ENCODE measurements at regions of chr6 and their contacts with region 1.

Region 1: DNA sequence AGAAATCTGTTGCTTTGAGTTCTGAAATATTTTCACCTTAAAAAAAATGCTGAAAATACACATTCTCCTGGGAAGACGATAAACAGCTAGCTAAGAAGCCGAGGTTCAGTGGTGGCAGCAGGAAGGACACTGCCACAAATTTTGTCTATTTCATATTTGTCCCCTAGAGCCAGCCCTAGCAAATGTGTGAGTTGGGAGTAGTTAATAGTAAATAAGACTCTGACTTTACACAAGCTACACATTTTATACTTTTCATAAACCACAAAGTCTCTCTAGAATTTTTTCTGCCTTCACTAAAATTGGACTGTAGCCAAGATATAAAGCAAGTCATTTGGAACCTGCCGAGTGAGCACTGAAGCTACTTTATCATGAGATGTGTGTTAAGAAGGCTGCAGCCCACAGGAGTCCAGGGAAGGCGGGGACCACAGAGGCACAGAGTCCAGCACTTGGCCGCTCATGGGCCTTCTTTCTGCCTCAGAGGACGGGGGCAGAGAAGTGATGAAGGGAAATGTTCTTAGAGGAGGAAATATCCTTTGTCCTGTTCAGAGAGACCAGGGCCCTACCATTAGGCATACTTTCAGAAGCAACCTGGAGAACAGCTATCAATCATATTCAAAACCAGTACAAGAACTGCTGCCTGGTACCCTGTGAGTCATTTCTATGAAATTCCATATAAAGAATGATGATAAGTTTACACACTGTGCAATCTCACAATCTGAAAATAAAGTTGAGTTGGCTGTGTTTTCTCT is 241.7 kb upstream of the TAB2 start:
- DNase-seq: no peak
- ATAC-seq: no peak
- H3K4me3 ChIP-seq: no peak overlapping the region
- H3K27ac ChIP-seq: no peak overlapping the region
- H3K4me1 ChIP-seq: peaks cover 31% of the 10 kb centered on the region
- H3K27me3 ChIP-seq: no peaks in the 10 kb centered on the region
- CTCF ChIP-seq: no peak
- EP300 ChIP-seq: no peak
- POLR2A ChIP-seq: no peak
- RAD21 ChIP-seq: no peak

Region 2: GRCh38 chr6:148999929-149000468 is 75.8 kb before region 1 on chr6:
- CTCF ChIA-PET with region 1: no interaction called
- POLR2A ChIA-PET with region 1: no interaction called
- RAD21 ChIA-PET with region 1: no interaction called
- SMC1A ChIA-PET with region 1: no interaction called
- in situ Hi-C with region 1: no loop called
- intact Hi-C with region 1: no loop called
- DNase-seq: no peak
- ATAC-seq: no peak
- H3K4me3 ChIP-seq: no peak overlapping the region
- H3K27ac ChIP-seq: no peak overlapping the region
- H3K4me1 ChIP-seq: no peaks in the 10 kb centered on the region
- H3K27me3 ChIP-seq: no peaks in the 10 kb centered on the region
- CTCF ChIP-seq: no peak
- EP300 ChIP-seq: no peak
- POLR2A ChIP-seq: no peak
- RAD21 ChIP-seq: no peak

Region 3: DNA sequence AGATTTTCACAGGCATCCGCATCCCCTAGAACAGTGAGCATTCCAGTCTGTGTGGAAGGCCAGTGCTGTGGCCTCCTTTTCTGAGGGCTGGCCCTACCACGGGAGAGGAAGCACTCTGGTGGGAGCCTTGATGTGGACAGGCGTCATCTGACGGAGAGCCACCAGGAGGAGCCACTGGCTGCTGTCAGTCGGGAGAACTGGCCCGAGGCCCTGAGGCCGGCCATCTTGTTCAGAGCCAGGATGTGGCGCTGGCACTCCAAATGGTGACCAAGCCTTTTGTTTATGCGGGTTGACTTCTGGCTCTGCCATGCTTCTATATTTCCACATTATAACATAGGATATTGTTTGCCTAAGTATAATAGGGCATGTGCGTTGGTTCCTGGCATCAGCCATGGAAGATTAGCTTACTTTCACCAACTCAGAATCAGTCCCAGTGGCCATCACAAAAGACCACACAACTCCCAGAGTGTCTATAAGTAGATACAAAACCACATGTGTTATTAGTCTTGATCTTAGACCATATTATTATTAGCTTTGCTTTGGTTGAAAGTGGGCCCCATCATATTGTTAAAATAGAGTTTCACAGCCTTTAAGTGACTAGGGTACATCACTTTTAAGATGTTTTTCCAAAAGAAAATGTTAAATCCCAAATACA is 32.2 kb before region 1 on chr6:
- CTCF ChIA-PET with region 1: interaction called, 19 read pairs
- POLR2A ChIA-PET with region 1: interaction called, 10 read pairs
- RAD21 ChIA-PET with region 1: interaction called, 32 read pairs
- SMC1A ChIA-PET with region 1: interaction called, 1,060 read pairs
- in situ Hi-C with region 1: no loop called
- intact Hi-C with region 1: no loop called
- DNase-seq: no peak
- ATAC-seq: peak; percentile 43
- H3K4me3 ChIP-seq: no peak overlapping the region
- H3K27ac ChIP-seq: no peak overlapping the region
- H3K4me1 ChIP-seq: peaks cover 46% of the 10 kb centered on the region
- H3K27me3 ChIP-seq: no peaks in the 10 kb centered on the region
- CTCF ChIP-seq: peak; percentile 45 to 62 (median 45)
- EP300 ChIP-seq: no peak
- POLR2A ChIP-seq: no peak
- RAD21 ChIP-seq: peak; percentile 53; the same call in 1 of the 2 replicates

Region 4: GRCh38 chr6:149202967-149203366 is 127.2 kb after region 1 on chr6:
- CTCF ChIA-PET with region 1: no interaction called
- POLR2A ChIA-PET with region 1: no interaction called
- RAD21 ChIA-PET with region 1: no interaction called
- SMC1A ChIA-PET with region 1: no interaction called
- in situ Hi-C with region 1: no loop called
- intact Hi-C with region 1: no loop called
- DNase-seq: no peak
- ATAC-seq: no peak
- H3K4me3 ChIP-seq: no peak overlapping the region
- H3K27ac ChIP-seq: no peak overlapping the region
- H3K4me1 ChIP-seq: no peaks in the 10 kb centered on the region
- H3K27me3 ChIP-seq: no peaks in the 10 kb centered on the region
- CTCF ChIP-seq: no peak
- EP300 ChIP-seq: no peak
- POLR2A ChIP-seq: no peak
- RAD21 ChIP-seq: no peak